Activated CD4-positive, alpha-beta memory T cell treated with anti-CD3 and anti-CD28 coated beads for 36 hours (primary cell): ENCODE measurements at regions of chr10 and their contacts with region 1.

Region 1: GRCh38 chr10:124719213-124719851 is 24.8 kb downstream of the FAM53B start:
- DNase-seq: peak; percentile 85
- H3K4me3 Mint-ChIP-seq: peak overlapping the region; percentile 74
- H3K27ac Mint-ChIP-seq: peak overlapping the region; percentile 96
- H3K4me1 Mint-ChIP-seq: peaks cover 92% of the 10 kb centered on the region
- H3K27me3 Mint-ChIP-seq: no peaks in the 10 kb centered on the region

Region 2: DNA sequence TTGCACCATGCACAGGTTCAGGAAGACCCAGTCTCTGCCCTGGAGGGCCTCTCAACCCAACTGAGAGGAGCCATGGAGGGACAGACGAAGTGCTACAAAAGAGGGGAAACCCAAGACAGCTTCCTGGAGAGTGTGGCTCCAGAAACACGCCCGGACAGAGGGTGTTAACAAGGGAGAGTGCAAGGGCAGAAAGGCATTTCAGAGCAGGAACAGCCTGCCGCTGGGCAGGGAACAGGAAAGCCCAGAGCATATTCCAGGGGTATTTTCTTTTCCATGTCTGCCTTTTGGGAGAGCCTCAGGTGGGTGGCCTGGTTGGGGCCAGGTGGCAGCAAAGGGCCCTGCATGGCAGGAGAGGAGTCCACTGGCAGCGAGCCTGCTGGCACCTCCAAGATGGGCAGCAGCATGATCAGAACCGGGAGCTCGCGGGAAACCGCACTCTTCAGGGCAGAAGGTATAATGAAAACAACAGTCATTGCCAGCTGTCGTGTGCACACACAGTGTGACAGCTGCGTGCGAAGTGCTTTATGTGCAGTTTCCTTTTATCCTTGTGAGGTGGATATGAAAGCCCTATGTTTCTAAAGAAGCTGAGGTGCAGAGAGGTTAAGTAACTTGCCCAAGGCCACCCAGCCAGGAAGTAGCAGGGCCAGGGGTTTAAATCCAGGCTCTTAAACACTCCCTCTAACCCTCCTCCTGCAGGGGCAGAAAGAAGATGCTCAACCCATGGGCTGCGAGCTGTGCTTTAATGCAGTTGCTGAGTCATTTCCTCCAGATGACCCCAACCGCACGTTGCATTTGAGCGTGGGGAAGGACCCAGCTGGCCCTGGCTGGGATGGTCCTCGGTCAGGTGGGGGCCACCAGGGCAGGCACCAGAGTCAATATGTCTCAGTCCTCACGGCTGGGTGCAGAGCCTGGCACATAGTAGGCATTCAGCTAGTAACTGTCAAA is 429.2 kb before region 1 on chr10:
- CTCF ChIA-PET with region 1: no interaction called
- POLR2A ChIA-PET with region 1: no interaction called
- intact Hi-C with region 1: no loop called
- DNase-seq: no peak
- H3K4me3 Mint-ChIP-seq: no peak overlapping the region
- H3K27ac Mint-ChIP-seq: no peak overlapping the region
- H3K4me1 Mint-ChIP-seq: peaks cover 3% of the 10 kb centered on the region
- H3K27me3 Mint-ChIP-seq: no peaks in the 10 kb centered on the region

Region 3: GRCh38 chr10:124626759-124627380 is 92.5 kb before region 1 on chr10:
- CTCF ChIA-PET with region 1: interaction called, 14 read pairs
- POLR2A ChIA-PET with region 1: no interaction called
- intact Hi-C with region 1: no loop called
- DNase-seq: peak; percentile 80
- H3K4me3 Mint-ChIP-seq: no peak overlapping the region
- H3K27ac Mint-ChIP-seq: no peak overlapping the region
- H3K4me1 Mint-ChIP-seq: peaks cover 51% of the 10 kb centered on the region
- H3K27me3 Mint-ChIP-seq: no peaks in the 10 kb centered on the region

Region 4: DNA sequence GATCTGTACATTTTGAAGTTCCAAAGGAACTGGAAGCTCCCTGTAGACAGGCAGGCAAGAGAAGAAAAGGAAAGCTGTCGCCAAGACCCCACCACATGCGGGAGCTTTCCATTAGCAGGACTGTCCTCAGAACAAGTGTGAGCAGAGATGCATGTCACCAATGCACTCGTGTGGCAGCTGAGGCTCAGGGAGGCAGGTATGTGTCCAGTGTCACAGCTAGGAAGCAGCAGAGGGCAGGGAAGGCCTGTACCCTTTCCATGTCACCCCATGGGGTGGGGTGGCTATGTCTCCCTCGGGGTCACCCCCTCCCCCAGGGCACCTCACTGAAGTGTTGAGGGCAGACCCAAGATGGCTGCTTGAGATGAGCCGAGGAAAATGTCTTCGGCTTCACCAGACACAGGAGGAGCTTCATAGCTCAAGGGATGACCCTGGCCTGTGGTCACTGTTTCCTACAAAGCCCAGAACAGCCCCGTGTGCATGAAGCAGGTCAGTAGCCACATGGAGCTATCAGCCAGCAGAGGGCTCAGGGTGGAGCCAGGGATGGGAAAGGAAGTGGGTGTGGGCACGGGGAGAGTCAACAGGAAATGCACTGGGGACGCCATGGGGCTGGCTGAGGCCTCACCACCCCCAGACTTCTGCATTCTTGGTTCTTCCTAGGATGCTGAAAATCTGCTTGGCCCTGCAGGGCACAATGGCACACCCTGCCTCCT is 71.8 kb before region 1 on chr10:
- CTCF ChIA-PET with region 1: interaction called, 26 read pairs
- POLR2A ChIA-PET with region 1: interaction called, 20 read pairs
- intact Hi-C with region 1: loop called (anchors 1 kb)
- DNase-seq: peak; percentile 87
- H3K4me3 Mint-ChIP-seq: peak overlapping the region; percentile 58
- H3K27ac Mint-ChIP-seq: peak overlapping the region; percentile 93
- H3K4me1 Mint-ChIP-seq: peaks cover 91% of the 10 kb centered on the region
- H3K27me3 Mint-ChIP-seq: no peaks in the 10 kb centered on the region

Region 5: DNA sequence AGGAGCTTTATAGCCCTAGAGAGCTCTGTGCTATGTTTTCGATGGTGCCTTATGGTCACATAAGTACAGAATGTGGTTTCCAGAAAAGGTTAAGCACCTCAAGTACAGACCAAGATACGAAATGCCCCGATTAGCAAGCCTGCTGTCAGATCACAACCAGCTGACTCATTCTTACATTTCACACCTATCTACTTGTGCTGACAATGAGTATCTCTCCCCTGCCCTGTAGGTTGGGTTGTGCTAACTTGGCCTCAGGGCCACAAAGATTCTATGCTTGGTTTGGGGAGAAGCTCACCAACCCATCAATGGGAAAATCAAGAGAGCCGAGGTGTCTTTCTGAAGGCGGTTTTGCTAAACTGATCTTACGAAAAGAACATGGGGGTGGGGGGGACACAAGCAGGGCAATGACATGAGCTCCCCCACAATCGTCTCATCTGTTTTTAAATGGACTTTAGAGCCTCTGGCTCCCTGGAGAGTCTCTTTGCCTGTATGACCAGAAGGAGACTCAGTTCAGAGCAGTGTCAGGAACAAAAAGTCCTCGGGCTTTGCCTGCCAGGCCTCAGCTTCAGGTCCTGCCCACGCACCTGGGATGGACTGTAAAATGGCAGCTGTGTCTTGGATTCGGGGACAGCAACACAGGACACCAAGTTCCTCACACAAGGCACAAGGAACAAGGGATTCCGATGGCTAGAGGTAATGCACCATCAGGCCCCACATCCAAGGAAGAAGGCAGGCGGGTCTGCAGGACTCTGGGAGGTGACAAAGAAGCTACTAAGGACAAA is 30.3 kb before region 1 on chr10:
- CTCF ChIA-PET with region 1: interaction called, 84 read pairs
- POLR2A ChIA-PET with region 1: interaction called, 155 read pairs
- intact Hi-C with region 1: loop called (anchors 1 kb)
- DNase-seq: peak; percentile 87
- H3K4me3 Mint-ChIP-seq: peak overlapping the region; percentile 44
- H3K27ac Mint-ChIP-seq: peak overlapping the region; percentile 92
- H3K4me1 Mint-ChIP-seq: peaks cover 87% of the 10 kb centered on the region
- H3K27me3 Mint-ChIP-seq: no peaks in the 10 kb centered on the region

Region 6: DNA sequence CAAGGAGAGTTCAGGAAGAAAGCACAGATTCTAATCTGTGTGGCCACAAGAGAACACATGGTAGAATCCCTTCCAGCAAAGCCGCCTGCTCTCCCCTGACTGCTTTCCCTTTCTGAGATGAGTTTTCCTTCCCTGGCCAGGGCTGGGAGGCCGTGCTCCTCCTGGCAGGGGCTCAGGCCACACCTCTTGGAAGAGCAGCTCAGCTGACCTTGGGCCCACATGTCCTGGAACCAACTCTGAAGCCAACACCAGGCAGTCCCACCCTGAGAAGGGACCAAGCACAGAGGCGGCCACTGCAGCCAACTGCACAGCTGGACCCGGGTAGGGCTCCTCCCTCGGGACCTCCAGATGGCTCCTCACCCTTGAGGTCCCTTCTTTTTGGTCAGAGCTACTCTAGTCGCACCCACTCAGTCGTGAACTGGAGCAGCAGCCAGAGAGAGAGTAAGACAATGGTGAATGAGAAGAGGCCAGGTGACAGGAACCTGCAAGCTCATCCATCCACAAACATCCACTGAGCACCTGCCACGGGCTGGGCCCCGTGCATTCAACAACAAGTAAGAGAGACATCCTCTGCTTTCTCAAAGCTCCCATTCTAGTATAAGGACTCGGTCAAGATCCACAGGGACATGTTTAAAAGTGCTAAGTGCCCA is 15.4 kb before region 1 on chr10:
- CTCF ChIA-PET with region 1: interaction called, 46 read pairs
- POLR2A ChIA-PET with region 1: interaction called, 39 read pairs
- intact Hi-C with region 1: no loop called
- DNase-seq: no peak
- H3K4me3 Mint-ChIP-seq: no peak overlapping the region
- H3K27ac Mint-ChIP-seq: peak overlapping the region; percentile 95
- H3K4me1 Mint-ChIP-seq: peaks cover 99% of the 10 kb centered on the region
- H3K27me3 Mint-ChIP-seq: no peaks in the 10 kb centered on the region

Region 7: GRCh38 chr10:124732931-124733570 is 13.7 kb after region 1 on chr10:
- CTCF ChIA-PET with region 1: interaction called, 115 read pairs
- POLR2A ChIA-PET with region 1: interaction called, 138 read pairs
- intact Hi-C with region 1: loop called (anchors 1 kb)
- DNase-seq: peak; percentile 90
- H3K4me3 Mint-ChIP-seq: peak overlapping the region; percentile 69
- H3K27ac Mint-ChIP-seq: peak overlapping the region; percentile 91
- H3K4me1 Mint-ChIP-seq: peaks cover 91% of the 10 kb centered on the region
- H3K27me3 Mint-ChIP-seq: no peaks in the 10 kb centered on the region

Region 8: DNA sequence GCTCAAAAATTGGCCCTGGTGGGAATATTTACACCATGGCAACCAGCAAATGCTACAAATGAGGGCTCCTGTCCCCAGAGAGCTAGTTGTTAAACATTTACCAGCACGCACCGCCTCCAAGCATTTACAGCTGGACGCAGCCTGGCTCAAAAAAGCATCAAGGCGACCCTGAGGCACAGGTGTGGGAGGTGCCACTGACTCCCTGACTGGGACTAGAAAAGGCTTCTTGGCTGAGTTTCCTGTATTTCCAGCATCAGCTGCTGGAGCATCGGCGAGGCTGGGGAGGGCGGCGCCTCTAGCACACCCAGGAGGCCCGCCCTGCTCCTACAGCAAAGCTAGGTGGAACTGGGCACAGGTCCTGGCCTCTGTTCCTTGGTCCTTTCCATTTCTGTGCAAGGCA is 179.1 kb after region 1 on chr10:
- CTCF ChIA-PET with region 1: no interaction called
- POLR2A ChIA-PET with region 1: no interaction called
- intact Hi-C with region 1: no loop called
- DNase-seq: no peak
- H3K4me3 Mint-ChIP-seq: no peak overlapping the region
- H3K27ac Mint-ChIP-seq: no peak overlapping the region
- H3K4me1 Mint-ChIP-seq: no peaks in the 10 kb centered on the region
- H3K27me3 Mint-ChIP-seq: peaks cover 11% of the 10 kb centered on the region